ENCODE measurements at regions of chr2 and their contacts with region 1.

Region 1: DNA sequence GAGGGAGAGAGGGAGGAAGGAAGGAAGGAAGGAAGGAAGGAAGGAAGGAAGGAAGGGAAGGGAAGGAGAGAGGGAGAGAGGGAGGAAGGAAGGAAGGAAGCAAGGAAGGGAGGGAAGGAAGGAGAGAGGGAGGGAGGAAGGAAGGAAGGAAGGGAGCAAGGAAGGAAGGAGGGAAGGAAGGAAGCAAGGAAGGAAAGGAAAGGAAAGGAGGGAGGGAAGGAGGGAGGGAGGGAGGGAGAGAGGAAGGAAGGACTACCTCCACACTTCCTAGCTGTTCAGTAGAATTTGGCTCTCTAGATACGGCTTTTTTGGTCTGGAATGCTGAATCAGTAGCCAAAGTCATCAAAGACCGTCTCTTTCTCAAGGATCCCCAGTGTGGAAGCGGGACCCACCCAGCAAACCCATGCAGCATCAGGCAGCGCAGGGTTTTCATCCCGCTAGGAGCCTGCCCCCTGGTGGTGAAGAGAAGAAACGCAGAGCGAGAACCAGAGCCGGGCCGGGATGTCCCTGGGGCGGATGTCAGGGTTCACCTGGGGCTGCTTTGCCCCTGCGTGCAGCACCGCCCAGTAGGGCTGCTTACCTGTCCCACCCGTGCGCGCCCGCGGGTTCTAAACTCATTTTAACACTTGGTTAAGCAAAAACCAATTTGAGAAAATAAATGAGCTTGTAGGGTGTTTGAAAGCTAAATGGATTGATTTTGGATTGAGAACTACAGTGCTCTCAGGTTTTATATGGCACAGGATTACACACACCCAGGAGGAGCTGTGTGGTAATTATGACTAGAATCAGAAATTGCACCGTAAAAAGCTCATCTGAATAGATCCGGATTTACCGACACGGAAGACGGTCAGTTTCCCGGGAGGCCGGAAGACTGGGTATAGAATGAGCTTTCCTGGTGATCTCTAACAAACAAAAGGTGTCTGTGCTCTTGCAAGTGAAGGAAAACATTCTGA is 48.1 kb upstream of the ARL4C start:
- DNase-seq: peak; percentile 23 to 69 (median 46)
- H3K4me3 ChIP-seq: no peak overlapping the region
- H3K27ac ChIP-seq: no peak overlapping the region
- H3K4me1 ChIP-seq: no peaks in the 10 kb centered on the region
- H3K27me3 ChIP-seq: no peaks in the 10 kb centered on the region
- CTCF ChIP-seq: peak; percentile 35 to 67 (median 42)
- EP300 ChIP-seq: no peak
- POLR2A ChIP-seq: no peak

Region 2: GRCh38 chr2:234395891-234396420 is 149.0 kb before region 1 on chr2:
- intact Hi-C with region 1: no loop called
- DNase-seq: no peak
- H3K4me3 ChIP-seq: no peak overlapping the region
- H3K27ac ChIP-seq: no peak overlapping the region
- H3K4me1 ChIP-seq: no peaks in the 10 kb centered on the region
- H3K27me3 ChIP-seq: no peaks in the 10 kb centered on the region
- CTCF ChIP-seq: no peak
- EP300 ChIP-seq: no peak
- POLR2A ChIP-seq: no peak

Region 3: GRCh38 chr2:234406085-234406484 is 138.8 kb before region 1 on chr2:
- intact Hi-C with region 1: no loop called
- DNase-seq: no peak
- H3K4me3 ChIP-seq: no peak overlapping the region
- H3K27ac ChIP-seq: no peak overlapping the region
- H3K4me1 ChIP-seq: no peaks in the 10 kb centered on the region
- H3K27me3 ChIP-seq: no peaks in the 10 kb centered on the region
- CTCF ChIP-seq: no peak
- EP300 ChIP-seq: no peak
- POLR2A ChIP-seq: no peak

Region 4: DNA sequence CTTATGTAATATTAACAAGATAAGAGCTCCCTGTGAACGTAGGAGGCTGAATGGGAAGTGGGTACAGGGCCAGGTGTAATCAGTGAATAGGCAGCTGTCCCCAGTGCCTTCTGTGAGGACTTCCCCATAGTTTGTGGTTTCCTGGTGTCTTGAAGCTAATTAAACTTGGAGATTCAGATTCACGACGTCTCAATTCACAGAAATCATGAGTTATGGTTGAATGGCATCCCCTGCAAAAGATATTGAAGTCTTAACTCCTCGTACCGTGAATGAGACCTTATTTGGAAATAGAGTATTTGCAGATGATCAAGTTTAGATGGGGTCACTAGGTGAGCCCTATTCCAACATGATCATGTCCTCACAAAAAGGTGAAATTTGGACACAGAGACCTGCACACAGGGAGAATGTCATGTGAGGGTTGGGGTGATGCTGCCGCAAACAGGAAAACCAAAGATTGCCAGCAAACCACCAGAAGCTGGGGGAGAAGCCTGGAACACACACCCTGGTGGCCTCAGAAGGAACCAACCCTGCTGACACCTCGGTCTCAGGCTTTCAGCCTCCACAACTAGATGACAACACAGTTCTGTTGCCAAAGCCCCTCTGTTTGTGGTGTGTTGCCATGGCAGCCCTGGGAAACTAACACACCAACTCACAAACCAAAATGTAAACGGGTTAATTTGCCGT is 61.2 kb before region 1 on chr2:
- intact Hi-C with region 1: no loop called
- DNase-seq: no peak
- H3K4me3 ChIP-seq: no peak overlapping the region
- H3K27ac ChIP-seq: no peak overlapping the region
- H3K4me1 ChIP-seq: no peaks in the 10 kb centered on the region
- H3K27me3 ChIP-seq: no peaks in the 10 kb centered on the region
- CTCF ChIP-seq: no peak
- EP300 ChIP-seq: no peak
- POLR2A ChIP-seq: no peak

Region 5: GRCh38 chr2:235106874-235107639 is 562.1 kb after region 1 on chr2:
- intact Hi-C with region 1: loop called in 3 of 4 experiments (anchors 5 kb)
- DNase-seq: peak; percentile 52 to 76 (median 64)
- H3K4me3 ChIP-seq: no peak overlapping the region
- H3K27ac ChIP-seq: no peak overlapping the region
- H3K4me1 ChIP-seq: no peaks in the 10 kb centered on the region
- H3K27me3 ChIP-seq: no peaks in the 10 kb centered on the region
- CTCF ChIP-seq: peak; percentile 24 to 60 (median 55)
- EP300 ChIP-seq: no peak
- POLR2A ChIP-seq: no peak

Measured in ovary (tissue), 10 donors.